PC-9 (cell line): ENCODE measurements at regions of chrX and their contacts with region 1.

Region 1: DNA sequence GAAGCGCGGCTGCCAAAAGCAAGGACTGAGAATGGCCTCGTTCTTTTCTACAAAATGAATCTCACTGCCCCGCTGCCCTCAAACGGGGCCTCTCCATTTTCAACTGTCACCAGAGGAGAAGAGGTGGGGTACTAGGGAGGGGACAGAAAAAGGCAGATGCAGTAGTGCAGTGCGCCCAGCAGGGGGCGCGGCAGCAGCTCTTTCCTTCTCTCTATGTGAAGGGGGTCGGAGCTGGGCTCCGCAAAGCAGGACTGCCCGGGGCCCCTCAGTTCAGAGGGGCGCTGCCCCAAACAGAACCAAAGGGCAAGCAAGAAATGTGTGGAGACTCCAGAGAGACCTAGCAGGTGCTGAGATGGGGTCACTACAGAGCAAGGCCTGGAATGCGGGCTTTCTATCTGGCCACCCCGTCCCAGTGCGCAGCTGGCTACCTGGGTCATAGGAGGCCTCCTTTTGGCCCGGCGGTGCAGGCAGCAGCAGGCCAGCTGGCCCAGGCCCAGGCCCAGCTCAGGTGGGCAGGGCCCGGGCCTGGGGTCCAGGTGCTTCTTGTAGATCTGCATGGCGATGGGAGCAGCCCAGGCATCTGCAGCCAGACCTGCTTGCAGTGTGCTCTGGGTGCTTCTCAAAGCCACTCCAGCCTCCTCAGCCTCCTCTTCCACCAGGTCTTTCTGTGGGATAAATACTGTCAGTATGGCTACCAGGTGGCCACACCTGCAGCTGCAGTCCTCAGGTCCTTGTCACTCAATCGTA is 5.9 kb downstream of the IRAK1 start:
- DNase-seq: peak in 1 of 2 experiments; percentile 50
- H3K4me3 ChIP-seq: no peak overlapping the region
- H3K27ac ChIP-seq: no peak overlapping the region
- H3K4me1 ChIP-seq: no peaks in the 10 kb centered on the region
- H3K27me3 ChIP-seq: no peaks in the 10 kb centered on the region
- CTCF ChIP-seq: peak; percentile 93

Region 2: GRCh38 chrX:153782313-153782712 is 231.5 kb before region 1 on chrX:
- CTCF ChIA-PET with region 1: interaction called, 26 read pairs
- POLR2A ChIA-PET with region 1: no interaction called
- intact Hi-C with region 1: no loop called
- DNase-seq: no peak
- H3K4me3 ChIP-seq: no peak overlapping the region
- H3K27ac ChIP-seq: no peak overlapping the region
- H3K4me1 ChIP-seq: no peaks in the 10 kb centered on the region
- H3K27me3 ChIP-seq: no peaks in the 10 kb centered on the region
- CTCF ChIP-seq: no peak

Region 3: DNA sequence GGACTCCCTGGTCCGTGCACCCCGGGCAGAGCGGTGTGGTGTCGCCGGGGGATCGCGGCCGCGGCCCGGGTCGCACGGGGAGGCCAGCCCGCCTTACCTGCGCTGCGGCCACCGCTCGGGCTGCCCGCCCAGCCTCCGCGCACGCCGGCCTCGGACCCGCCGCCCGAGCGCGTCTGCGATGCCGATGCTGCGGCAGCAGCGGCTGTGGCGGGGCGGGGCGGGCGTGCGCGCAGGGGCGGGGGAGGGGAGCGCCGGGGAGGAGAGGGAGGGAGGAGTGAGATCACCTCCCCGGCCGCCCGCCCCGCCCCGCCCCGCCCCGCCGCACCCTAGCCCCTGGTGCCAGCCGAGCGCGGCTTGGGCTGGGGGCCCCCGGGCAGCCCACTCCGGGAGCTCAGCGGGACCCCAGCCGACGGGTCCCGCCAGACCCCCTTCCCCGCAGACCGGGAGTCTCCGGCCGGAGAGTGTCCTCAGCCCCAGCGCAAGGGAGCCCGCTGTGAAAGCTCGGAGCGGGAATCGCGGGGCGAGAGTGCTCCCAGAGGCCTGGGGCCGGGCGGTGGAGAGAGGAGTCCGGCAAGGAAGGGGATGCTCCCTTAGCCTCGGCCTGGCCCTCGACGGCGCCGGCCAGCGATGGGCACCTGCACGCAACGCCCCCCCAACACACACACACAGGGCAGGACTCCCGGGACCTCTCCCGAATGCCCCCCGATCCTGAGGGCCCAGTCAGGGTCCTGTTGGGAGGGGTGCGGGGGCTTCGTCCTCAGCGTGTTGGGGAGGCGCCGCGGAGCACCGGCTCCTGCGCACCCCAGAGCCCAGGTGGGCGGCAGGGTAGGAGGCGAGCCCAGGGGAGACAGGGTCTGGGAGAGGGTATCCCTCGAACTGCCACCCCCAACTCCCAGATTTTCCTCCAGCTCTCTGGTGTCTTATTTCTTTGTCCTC is 127.6 kb before region 1 on chrX and contains the start of gene L1CAM:
- CTCF ChIA-PET with region 1: no interaction called
- POLR2A ChIA-PET with region 1: no interaction called
- intact Hi-C with region 1: no loop called
- DNase-seq: no peak
- H3K4me3 ChIP-seq: no peak within 1 kb of the TSS
- H3K27ac ChIP-seq: no peak within 1 kb of the TSS
- H3K4me1 ChIP-seq: 0 out of 2 replicates have a peak, but pooled peaks cover 12% of the 10 kb centered on the region
- H3K27me3 ChIP-seq: peaks cover 11% of the 10 kb centered on the region
- CTCF ChIP-seq: no peak
- total RNA-seq, gene L1CAM: 68.8 and 79.0 TPM in 2 replicates

Region 4: GRCh38 chrX:153993978-153994377 is 19.8 kb before region 1 on chrX:
- CTCF ChIA-PET with region 1: no interaction called
- POLR2A ChIA-PET with region 1: interaction called, 10 read pairs
- intact Hi-C with region 1: no loop called
- DNase-seq: no peak
- H3K4me3 ChIP-seq: no peak overlapping the region
- H3K27ac ChIP-seq: no peak overlapping the region
- H3K4me1 ChIP-seq: no peaks in the 10 kb centered on the region
- H3K27me3 ChIP-seq: no peaks in the 10 kb centered on the region
- CTCF ChIP-seq: no peak

Region 5: GRCh38 chrX:154596290-154596929 is 582.6 kb after region 1 on chrX:
- CTCF ChIA-PET with region 1: no interaction called
- POLR2A ChIA-PET with region 1: no interaction called
- intact Hi-C with region 1: no loop called
- DNase-seq: peak; percentile 96 to 98
- H3K4me3 ChIP-seq: peak overlapping the region; percentile 32; the same call in 1 of the 2 replicates
- H3K27ac ChIP-seq: peak overlapping the region; percentile 98
- H3K4me1 ChIP-seq: peaks cover 68% of the 10 kb centered on the region
- H3K27me3 ChIP-seq: no peaks in the 10 kb centered on the region
- CTCF ChIP-seq: no peak